ENCODE measurements at regions of chr1 and their contacts with region 1.

Region 1: GRCh38 chr1:36088575-36089443 is at the start of gene ADPRS:
- DNase-seq: peak; percentile 52
- ATAC-seq: peak; percentile 92
- H3K4me3 ChIP-seq: peak within 1 kb of the TSS; percentile 98
- H3K27ac ChIP-seq: peak within 1 kb of the TSS; percentile 82
- H3K4me1 ChIP-seq: no peaks in the 10 kb centered on the region; the same call in 1 of the 2 replicates
- H3K27me3 ChIP-seq: no peaks in the 10 kb centered on the region; a peak in 1 of 4 replicates
- CTCF ChIP-seq: peak; percentile 97 to 99 (median 98)
- EP300 ChIP-seq: no peak; a peak in 1 of 4 replicates
- POLR2A ChIP-seq: peak; percentile 99
- RAD21 ChIP-seq: peak; percentile 34; the same call in 1 of the 2 replicates
- polyA plus RNA-seq, gene ADPRS: 7.6 to 12.1 TPM

Region 2: GRCh38 chr1:35857830-35858229 is 231.0 kb before region 1 on chr1:
- CTCF ChIA-PET with region 1: interaction called, 3 read pairs
- POLR2A ChIA-PET with region 1: no interaction called
- RAD21 ChIA-PET with region 1: interaction called, 3 read pairs
- SMC1A ChIA-PET with region 1: no interaction called
- in situ Hi-C with region 1: no loop called
- intact Hi-C with region 1: loop called (anchors 5 kb)
- DNase-seq: no peak
- ATAC-seq: peak; percentile 49; the same call in 1 of the 3 replicates
- H3K4me3 ChIP-seq: no peak overlapping the region
- H3K27ac ChIP-seq: no peak overlapping the region
- H3K4me1 ChIP-seq: no peaks in the 10 kb centered on the region
- H3K27me3 ChIP-seq: no peaks in the 10 kb centered on the region
- CTCF ChIP-seq: peak; percentile 25 to 48 (median 31); a peak in 4 of 6 replicates
- EP300 ChIP-seq: no peak
- POLR2A ChIP-seq: no peak
- RAD21 ChIP-seq: peak; percentile 36; the same call in 1 of the 2 replicates

Region 3: GRCh38 chr1:35882945-35883634 is 205.7 kb before region 1 on chr1 and contains the start of gene AGO1:
- CTCF ChIA-PET with region 1: interaction called, 3 read pairs
- POLR2A ChIA-PET with region 1: no interaction called
- RAD21 ChIA-PET with region 1: no interaction called
- SMC1A ChIA-PET with region 1: no interaction called
- in situ Hi-C with region 1: no loop called
- intact Hi-C with region 1: loop called (anchors 10 kb)
- DNase-seq: peak; percentile 63
- ATAC-seq: peak; percentile 93
- H3K4me3 ChIP-seq: peak within 1 kb of the TSS; percentile 97
- H3K27ac ChIP-seq: peak within 1 kb of the TSS; percentile 65
- H3K4me1 ChIP-seq: peaks cover 14% of the 10 kb centered on the region
- H3K27me3 ChIP-seq: no peaks in the 10 kb centered on the region
- CTCF ChIP-seq: peak; percentile 95 to 98 (median 97); a peak in 5 of 6 replicates
- EP300 ChIP-seq: no peak
- POLR2A ChIP-seq: peak; percentile 83
- RAD21 ChIP-seq: peak; percentile 51
- polyA plus RNA-seq, gene AGO1: 1.8 to 3.3 TPM

Region 4: DNA sequence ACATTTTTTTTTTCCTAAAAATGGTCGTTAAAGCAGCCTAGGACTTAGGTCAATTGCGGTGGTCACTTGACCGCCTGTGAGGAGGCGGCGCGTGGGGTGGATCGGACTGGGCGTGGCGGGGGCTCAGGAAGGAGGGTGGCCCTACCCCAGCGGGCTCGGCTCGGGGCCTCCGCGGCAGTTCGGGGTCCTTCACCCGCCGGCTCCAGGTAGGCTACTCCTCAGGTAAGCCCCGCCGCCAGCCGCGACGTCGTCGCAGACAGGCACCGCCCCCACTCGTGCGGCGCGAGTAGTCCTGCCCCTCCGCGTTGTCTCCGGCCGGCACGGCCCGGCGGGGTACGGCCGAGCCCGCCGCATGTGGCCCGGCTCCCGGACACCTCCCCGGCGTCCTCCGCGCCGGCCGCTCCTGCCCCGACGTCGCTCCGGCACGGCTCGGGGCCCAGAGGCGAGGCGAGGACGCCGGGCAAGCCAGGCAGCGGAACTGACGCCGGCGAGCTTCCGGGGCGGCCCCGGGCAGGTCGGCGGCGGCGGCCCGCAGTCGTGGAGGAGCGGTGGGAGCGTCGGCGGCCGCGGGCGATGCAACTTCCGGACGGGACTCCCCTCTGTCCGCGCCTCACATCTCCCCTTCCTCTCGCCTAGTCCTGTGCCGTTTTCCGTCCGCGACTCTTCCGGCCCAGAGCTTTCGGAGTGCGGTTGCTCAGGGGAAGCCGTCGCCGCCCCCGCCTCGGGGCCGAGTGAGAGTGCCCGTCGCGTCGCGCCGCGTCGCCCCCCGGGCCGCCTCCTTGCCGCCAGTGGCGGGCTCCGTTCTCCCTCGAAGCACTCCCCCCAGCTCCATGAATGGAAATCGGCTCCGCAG is 158.0 kb before region 1 on chr1 and contains the start of gene AGO3:
- CTCF ChIA-PET with region 1: no interaction called
- POLR2A ChIA-PET with region 1: no interaction called
- RAD21 ChIA-PET with region 1: no interaction called
- SMC1A ChIA-PET with region 1: no interaction called
- in situ Hi-C with region 1: no loop called
- intact Hi-C with region 1: loop called (anchors 2 kb)
- DNase-seq: peak; percentile 60
- ATAC-seq: peak; percentile 91
- H3K4me3 ChIP-seq: peak within 1 kb of the TSS; percentile 97
- H3K27ac ChIP-seq: peak within 1 kb of the TSS; percentile 78
- H3K4me1 ChIP-seq: peaks cover 5% of the 10 kb centered on the region
- H3K27me3 ChIP-seq: no peaks in the 10 kb centered on the region
- CTCF ChIP-seq: no peak
- EP300 ChIP-seq: no peak
- POLR2A ChIP-seq: peak; percentile 84
- RAD21 ChIP-seq: no peak
- polyA plus RNA-seq, gene AGO3: 3.9 to 4.2 TPM

Region 5: GRCh38 chr1:36068883-36069282 is 19.9 kb before region 1 on chr1:
- CTCF ChIA-PET with region 1: no interaction called
- POLR2A ChIA-PET with region 1: no interaction called
- RAD21 ChIA-PET with region 1: no interaction called
- SMC1A ChIA-PET with region 1: no interaction called
- in situ Hi-C with region 1: no loop called
- intact Hi-C with region 1: no loop called
- DNase-seq: no peak
- ATAC-seq: no peak
- H3K4me3 ChIP-seq: no peak overlapping the region
- H3K27ac ChIP-seq: no peak overlapping the region
- H3K4me1 ChIP-seq: no peaks in the 10 kb centered on the region
- H3K27me3 ChIP-seq: no peaks in the 10 kb centered on the region
- CTCF ChIP-seq: no peak
- EP300 ChIP-seq: no peak
- POLR2A ChIP-seq: no peak
- RAD21 ChIP-seq: no peak

Region 6: GRCh38 chr1:36142121-36142520 is 53.3 kb after region 1 on chr1:
- CTCF ChIA-PET with region 1: no interaction called
- POLR2A ChIA-PET with region 1: no interaction called
- RAD21 ChIA-PET with region 1: no interaction called
- SMC1A ChIA-PET with region 1: no interaction called
- in situ Hi-C with region 1: loop called (anchors 5 kb)
- intact Hi-C with region 1: no loop called
- DNase-seq: no peak
- ATAC-seq: no peak
- H3K4me3 ChIP-seq: no peak overlapping the region
- H3K27ac ChIP-seq: no peak overlapping the region; the same call in 1 of the 2 replicates
- H3K4me1 ChIP-seq: peaks cover 18% of the 10 kb centered on the region
- H3K27me3 ChIP-seq: no peaks in the 10 kb centered on the region
- CTCF ChIP-seq: no peak
- EP300 ChIP-seq: no peak
- POLR2A ChIP-seq: no peak
- RAD21 ChIP-seq: no peak